Activated CD4-positive, alpha-beta memory T cell treated with anti-CD3 and anti-CD28 coated beads for 36 hours (primary cell): ENCODE measurements at regions of chr11 and their contacts with region 1.

Region 1: GRCh38 chr11:11798586-11799438 is 43.0 kb upstream of the USP47 start:
- DNase-seq: peak; percentile 85
- H3K4me3 Mint-ChIP-seq: no peak overlapping the region
- H3K27ac Mint-ChIP-seq: no peak overlapping the region
- H3K4me1 Mint-ChIP-seq: no peaks in the 10 kb centered on the region
- H3K27me3 Mint-ChIP-seq: peaks cover 21% of the 10 kb centered on the region

Region 2: GRCh38 chr11:11569936-11570491 is 228.8 kb before region 1 on chr11:
- CTCF ChIA-PET with region 1: no interaction called
- POLR2A ChIA-PET with region 1: no interaction called
- intact Hi-C with region 1: no loop called
- DNase-seq: no peak
- H3K4me3 Mint-ChIP-seq: no peak overlapping the region
- H3K27ac Mint-ChIP-seq: no peak overlapping the region
- H3K4me1 Mint-ChIP-seq: peaks cover 2% of the 10 kb centered on the region
- H3K27me3 Mint-ChIP-seq: peaks cover 7% of the 10 kb centered on the region

Region 3: GRCh38 chr11:11848891-11849746 is 50.3 kb after region 1 on chr11:
- CTCF ChIA-PET with region 1: interaction called, 59 read pairs
- POLR2A ChIA-PET with region 1: no interaction called
- intact Hi-C with region 1: loop called (anchors 1 kb)
- DNase-seq: peak; percentile 71
- H3K4me3 Mint-ChIP-seq: no peak overlapping the region
- H3K27ac Mint-ChIP-seq: no peak overlapping the region
- H3K4me1 Mint-ChIP-seq: peaks cover 76% of the 10 kb centered on the region
- H3K27me3 Mint-ChIP-seq: no peaks in the 10 kb centered on the region

Region 4: DNA sequence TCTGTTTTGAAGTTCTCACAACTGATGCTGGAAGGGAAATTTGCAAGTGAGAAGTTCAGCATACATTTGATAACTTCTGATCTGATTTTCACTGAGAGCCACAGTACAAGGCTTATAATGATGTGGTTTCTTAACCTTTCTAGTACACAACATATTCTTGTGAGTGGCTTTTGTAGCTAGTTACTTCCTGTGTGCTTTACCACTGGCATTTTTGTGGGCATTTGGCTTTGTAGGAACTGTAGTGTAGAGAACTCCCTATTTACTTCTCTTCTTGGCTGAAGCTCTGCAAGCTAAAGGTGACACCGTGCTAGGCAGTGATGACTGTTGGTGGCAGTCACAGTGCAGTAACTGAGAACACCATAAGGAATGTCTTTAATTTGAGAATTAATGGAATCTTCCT is 57.8 kb after region 1 on chr11:
- CTCF ChIA-PET with region 1: interaction called, 59 read pairs
- POLR2A ChIA-PET with region 1: no interaction called
- intact Hi-C with region 1: no loop called
- DNase-seq: no peak
- H3K4me3 Mint-ChIP-seq: no peak overlapping the region
- H3K27ac Mint-ChIP-seq: peak overlapping the region; percentile 62
- H3K4me1 Mint-ChIP-seq: peaks cover 55% of the 10 kb centered on the region
- H3K27me3 Mint-ChIP-seq: no peaks in the 10 kb centered on the region

Region 5: GRCh38 chr11:11913395-11913794 is 114.6 kb after region 1 on chr11:
- CTCF ChIA-PET with region 1: no interaction called
- POLR2A ChIA-PET with region 1: no interaction called
- intact Hi-C with region 1: no loop called
- DNase-seq: no peak
- H3K4me3 Mint-ChIP-seq: no peak overlapping the region
- H3K27ac Mint-ChIP-seq: no peak overlapping the region
- H3K4me1 Mint-ChIP-seq: peaks cover under 1% of the 10 kb centered on the region
- H3K27me3 Mint-ChIP-seq: no peaks in the 10 kb centered on the region

Region 6: GRCh38 chr11:11966826-11967668 is 168.2 kb after region 1 on chr11:
- CTCF ChIA-PET with region 1: interaction called, 8 read pairs
- POLR2A ChIA-PET with region 1: no interaction called
- intact Hi-C with region 1: loop called (anchors 2 kb)
- DNase-seq: peak; percentile 83
- H3K4me3 Mint-ChIP-seq: no peak overlapping the region
- H3K27ac Mint-ChIP-seq: no peak overlapping the region
- H3K4me1 Mint-ChIP-seq: peaks cover 2% of the 10 kb centered on the region
- H3K27me3 Mint-ChIP-seq: no peaks in the 10 kb centered on the region

Region 7: GRCh38 chr11:12043959-12044819 is 245.4 kb after region 1 on chr11:
- CTCF ChIA-PET with region 1: interaction called, 35 read pairs
- POLR2A ChIA-PET with region 1: no interaction called
- intact Hi-C with region 1: loop called (anchors 1 kb)
- DNase-seq: peak; percentile 76
- H3K4me3 Mint-ChIP-seq: no peak overlapping the region
- H3K27ac Mint-ChIP-seq: no peak overlapping the region
- H3K4me1 Mint-ChIP-seq: peaks cover 4% of the 10 kb centered on the region
- H3K27me3 Mint-ChIP-seq: peaks cover 1% of the 10 kb centered on the region